Breast epithelium (tissue), 4 donors: ENCODE measurements at regions of chr2 and their contacts with region 1.

Region 1: DNA sequence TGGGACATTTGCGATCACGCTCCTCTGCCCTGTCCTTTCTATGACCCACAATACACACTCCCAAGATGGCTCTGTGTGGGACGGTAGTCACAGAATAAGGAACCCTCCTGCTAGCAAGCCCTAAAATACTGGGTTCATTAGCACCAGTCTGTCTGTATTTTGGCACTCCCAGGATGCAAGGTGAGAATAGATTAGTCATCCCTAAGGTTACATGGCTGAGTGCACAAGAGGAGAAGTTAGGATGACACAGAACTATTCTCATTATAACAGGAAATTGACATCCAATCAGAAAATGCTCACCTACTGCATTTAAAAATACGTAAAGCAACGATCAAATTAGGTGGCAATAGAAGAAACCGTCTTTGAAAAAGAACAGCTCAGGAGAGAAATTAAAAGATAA is 590.2 kb downstream of the EPHA4 start:
- DNase-seq: no peak
- H3K4me3 ChIP-seq: no peak overlapping the region
- H3K27ac ChIP-seq: no peak overlapping the region
- H3K4me1 ChIP-seq: no peaks in the 10 kb centered on the region
- H3K27me3 ChIP-seq: no peaks in the 10 kb centered on the region
- CTCF ChIP-seq: no peak
- POLR2A ChIP-seq: no peak

Region 2: DNA sequence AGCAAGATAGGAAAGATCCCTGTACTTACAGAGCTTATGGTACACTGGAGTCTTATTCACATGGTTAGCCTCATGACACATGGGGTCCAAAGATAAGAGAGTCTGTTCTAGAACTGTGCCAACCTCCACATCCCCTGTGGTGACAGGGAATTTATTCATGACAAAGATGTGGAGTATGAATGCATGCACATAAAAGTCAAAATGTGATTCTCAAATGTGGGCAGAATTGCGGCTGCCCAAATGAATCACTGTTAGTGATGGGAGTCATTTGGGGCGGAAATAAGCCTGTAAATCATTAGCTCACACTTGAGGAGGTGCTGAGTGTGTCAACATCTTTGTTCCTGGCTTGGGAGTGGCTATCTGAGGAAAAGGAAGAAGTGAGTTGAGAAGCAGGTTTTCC is 793.9 kb before region 1 on chr2:
- intact Hi-C with region 1: loop called (anchors 5 kb)
- DNase-seq: no peak
- H3K4me3 ChIP-seq: no peak overlapping the region
- H3K27ac ChIP-seq: no peak overlapping the region
- H3K4me1 ChIP-seq: no peaks in the 10 kb centered on the region
- H3K27me3 ChIP-seq: no peaks in the 10 kb centered on the region
- CTCF ChIP-seq: no peak
- POLR2A ChIP-seq: no peak

Region 3: GRCh38 chr2:220628252-220628651 is 353.7 kb before region 1 on chr2:
- intact Hi-C with region 1: no loop called
- DNase-seq: no peak
- H3K4me3 ChIP-seq: no peak overlapping the region
- H3K27ac ChIP-seq: no peak overlapping the region
- H3K4me1 ChIP-seq: no peaks in the 10 kb centered on the region
- H3K27me3 ChIP-seq: no peaks in the 10 kb centered on the region
- CTCF ChIP-seq: no peak
- POLR2A ChIP-seq: no peak